ENCODE measurements at regions of chr3 and their contacts with region 1.

Region 1: GRCh38 chr3:47989981-47990440 is 26.2 kb downstream of the MAP4 start:
- DNase-seq: peak; percentile 82
- H3K4me3 ChIP-seq: no peak overlapping the region
- H3K27ac ChIP-seq: peak overlapping the region; percentile 41
- H3K4me1 ChIP-seq: peaks cover 11% of the 10 kb centered on the region
- H3K27me3 ChIP-seq: no peaks in the 10 kb centered on the region
- CTCF ChIP-seq: peak; percentile 88 to 97

Region 2: DNA sequence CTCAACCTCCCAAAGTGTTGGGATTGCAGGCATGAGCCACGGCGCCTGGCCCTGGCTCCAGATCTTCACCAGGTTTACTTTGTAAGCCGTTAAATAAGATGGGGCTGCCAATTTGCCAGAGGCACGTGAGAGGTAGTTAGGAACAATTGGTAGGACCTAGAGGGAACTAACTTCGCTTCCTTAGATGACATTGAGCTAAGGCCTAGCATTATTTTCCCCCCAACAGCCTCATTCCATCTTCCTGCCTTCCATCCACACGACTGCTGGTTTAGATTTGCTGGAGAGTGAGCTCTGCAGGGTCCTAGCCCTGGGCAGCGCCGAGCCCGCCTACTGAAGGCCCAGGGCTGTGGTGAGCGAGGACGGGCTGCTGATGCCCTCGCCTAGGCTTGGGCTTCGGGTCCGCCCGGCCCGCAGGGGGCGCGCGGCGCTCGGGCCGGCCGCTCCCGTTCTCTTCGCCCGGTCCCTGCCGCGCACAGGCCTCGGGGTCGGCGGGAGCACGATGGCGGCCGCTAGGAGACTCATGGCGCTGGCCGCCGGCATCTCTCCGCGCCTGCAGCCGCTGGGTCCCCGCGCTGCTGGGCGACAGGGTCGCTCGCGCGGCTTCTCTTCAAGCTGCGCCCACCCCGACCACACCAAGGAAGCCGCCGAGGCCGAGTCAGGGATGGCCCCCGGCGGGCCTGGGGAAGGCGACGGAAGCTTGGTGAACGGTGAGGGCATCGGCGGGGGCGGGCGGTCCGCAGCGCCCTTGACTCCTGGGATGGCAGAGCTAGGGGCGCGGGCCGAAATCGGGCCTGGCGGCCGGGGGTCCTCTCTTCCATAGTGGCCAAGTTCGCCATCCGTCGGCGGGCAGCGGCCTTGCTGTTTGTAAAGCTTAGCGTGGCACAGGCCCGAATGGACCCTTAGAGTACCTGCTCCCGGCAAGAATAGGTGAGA is 165.2 kb before region 1 on chr3:
- CTCF ChIA-PET with region 1: interaction called, 3 read pairs
- dilution Hi-C with region 1: no loop called
- in situ Hi-C with region 1: no loop called
- intact Hi-C with region 1: loop called (anchors 1 kb)
- DNase-seq: peak; percentile 82
- H3K4me3 ChIP-seq: peak overlapping the region; percentile 73 to 93 (median 82)
- H3K27ac ChIP-seq: peak overlapping the region; percentile 61
- H3K4me1 ChIP-seq: peaks cover 5% of the 10 kb centered on the region
- H3K27me3 ChIP-seq: no peaks in the 10 kb centered on the region
- CTCF ChIP-seq: peak; percentile 51 to 70

Region 3: GRCh38 chr3:47877290-47877689 is 112.7 kb before region 1 on chr3:
- CTCF ChIA-PET with region 1: no interaction called
- dilution Hi-C with region 1: no loop called
- in situ Hi-C with region 1: no loop called
- intact Hi-C with region 1: loop called (anchors 5 kb)
- DNase-seq: peak; percentile 18
- H3K4me3 ChIP-seq: no peak overlapping the region
- H3K27ac ChIP-seq: peak overlapping the region; percentile 29
- H3K4me1 ChIP-seq: peaks cover 20% of the 10 kb centered on the region
- H3K27me3 ChIP-seq: no peaks in the 10 kb centered on the region
- CTCF ChIP-seq: no peak

Region 4: GRCh38 chr3:48088749-48089466 is 98.9 kb after region 1 on chr3:
- CTCF ChIA-PET with region 1: no interaction called
- dilution Hi-C with region 1: no loop called
- in situ Hi-C with region 1: no loop called
- intact Hi-C with region 1: loop called (anchors 5 kb)
- DNase-seq: peak; percentile 98
- H3K4me3 ChIP-seq: peak overlapping the region; percentile 83 to 92 (median 90)
- H3K27ac ChIP-seq: peak overlapping the region; percentile 93
- H3K4me1 ChIP-seq: peaks cover 17% of the 10 kb centered on the region
- H3K27me3 ChIP-seq: no peaks in the 10 kb centered on the region
- CTCF ChIP-seq: peak in 1 of 2 donors; percentile 29

Region 5: GRCh38 chr3:48151058-48151806 is 161.2 kb after region 1 on chr3:
- CTCF ChIA-PET with region 1: no interaction called
- dilution Hi-C with region 1: no loop called
- in situ Hi-C with region 1: loop called in 1 of 2 experiments (anchors 10 kb)
- intact Hi-C with region 1: loop called (anchors 1 kb)
- DNase-seq: peak; percentile 66
- H3K4me3 ChIP-seq: no peak overlapping the region
- H3K27ac ChIP-seq: no peak overlapping the region
- H3K4me1 ChIP-seq: peaks cover 12% of the 10 kb centered on the region
- H3K27me3 ChIP-seq: no peaks in the 10 kb centered on the region
- CTCF ChIP-seq: peak; percentile 90 to 96

Measured in mammary epithelial cell (primary cell).